Heart left ventricle (tissue), 16 donors: ENCODE measurements at regions of chr18 and their contacts with region 1.

Region 1: GRCh38 chr18:12934454-12935071 is 13.2 kb upstream of the SEH1L start:
- DNase-seq: peak; percentile 74 to 88 (median 82)
- ATAC-seq: peak; percentile 68 to 95 (median 92)
- H3K4me3 ChIP-seq: no peak overlapping the region
- H3K27ac ChIP-seq: no peak overlapping the region
- H3K4me1 ChIP-seq: peaks cover 0 to 7% (median 0%) of the 10 kb centered on the region in 12 donors
- H3K27me3 ChIP-seq: no peaks in the 10 kb centered on the region
- CTCF ChIP-seq: peak; percentile 70 to 96 (median 88)
- POLR2A ChIP-seq: no peak

Region 2: GRCh38 chr18:12391618-12392165 is 542.9 kb before region 1 on chr18:
- intact Hi-C with region 1: loop called in 3 of 10 experiments (anchors 5 to 10 kb)
- DNase-seq: peak in 3 of 5 donors; percentile 37 to 54 (median 53)
- ATAC-seq: peak; percentile 85 to 95 (median 92)
- H3K4me3 ChIP-seq: no peak overlapping the region
- H3K27ac ChIP-seq: no peak overlapping the region
- H3K4me1 ChIP-seq: no peaks in the 10 kb centered on the region
- H3K27me3 ChIP-seq: no peaks in the 10 kb centered on the region
- CTCF ChIP-seq: peak; percentile 83 to 96 (median 90)
- POLR2A ChIP-seq: no peak

Region 3: DNA sequence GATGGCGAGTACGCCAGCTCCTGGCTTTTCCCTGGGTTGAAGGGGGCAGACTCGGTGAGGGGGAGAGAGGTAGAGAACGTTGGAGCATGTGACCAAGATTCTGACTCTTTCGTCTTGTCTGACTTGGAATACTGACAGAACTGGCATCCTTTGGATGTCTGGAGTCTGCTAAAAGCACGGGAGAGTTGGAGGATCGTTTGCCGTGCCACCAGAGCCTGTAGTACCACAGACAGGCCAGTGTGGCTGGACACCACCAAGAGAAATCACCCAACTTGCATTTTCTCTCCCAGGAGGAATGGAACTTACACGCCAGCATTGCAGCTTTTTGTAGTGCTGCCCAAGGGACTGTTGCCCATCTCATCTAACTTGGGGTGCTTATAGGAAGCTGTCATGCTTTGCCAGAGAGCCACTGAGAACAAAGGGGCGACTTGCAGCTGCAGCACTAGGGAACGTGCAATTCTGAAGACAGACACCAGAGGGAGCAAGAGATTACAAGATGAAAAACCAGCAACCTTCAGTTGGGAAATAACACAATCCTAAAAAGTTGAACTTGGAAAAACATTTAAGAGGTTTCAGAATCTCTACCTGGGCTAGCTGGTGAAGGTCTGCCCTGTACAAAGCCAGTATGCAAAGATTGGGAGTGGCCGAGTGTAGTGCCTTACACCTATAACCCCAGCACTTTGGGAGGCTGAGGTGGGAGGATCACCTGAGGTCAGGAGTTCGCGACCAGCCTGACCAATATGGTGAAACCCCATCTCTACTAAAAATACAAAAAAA is 207.6 kb before region 1 on chr18:
- intact Hi-C with region 1: loop called (anchors 1 to 2 kb)
- DNase-seq: peak in 2 of 5 donors; percentile 44 to 49
- ATAC-seq: peak; percentile 37 to 68 (median 66)
- H3K4me3 ChIP-seq: no peak overlapping the region
- H3K27ac ChIP-seq: no peak overlapping the region
- H3K4me1 ChIP-seq: no peaks in the 10 kb centered on the region
- H3K27me3 ChIP-seq: no peaks in the 10 kb centered on the region
- CTCF ChIP-seq: peak; percentile 71 to 93 (median 87)
- POLR2A ChIP-seq: no peak

Region 4: GRCh38 chr18:12744103-12744502 is 190.5 kb before region 1 on chr18:
- intact Hi-C with region 1: loop called in 9 of 10 experiments (anchors 1 to 5 kb)
- DNase-seq: no peak
- ATAC-seq: peak in 3 of 4 donors; percentile 48 to 61 (median 55)
- H3K4me3 ChIP-seq: no peak overlapping the region
- H3K27ac ChIP-seq: no peak overlapping the region
- H3K4me1 ChIP-seq: no peaks in the 10 kb centered on the region
- H3K27me3 ChIP-seq: no peaks in the 10 kb centered on the region
- CTCF ChIP-seq: peak; percentile 25 to 69 (median 52)
- POLR2A ChIP-seq: no peak

Region 5: DNA sequence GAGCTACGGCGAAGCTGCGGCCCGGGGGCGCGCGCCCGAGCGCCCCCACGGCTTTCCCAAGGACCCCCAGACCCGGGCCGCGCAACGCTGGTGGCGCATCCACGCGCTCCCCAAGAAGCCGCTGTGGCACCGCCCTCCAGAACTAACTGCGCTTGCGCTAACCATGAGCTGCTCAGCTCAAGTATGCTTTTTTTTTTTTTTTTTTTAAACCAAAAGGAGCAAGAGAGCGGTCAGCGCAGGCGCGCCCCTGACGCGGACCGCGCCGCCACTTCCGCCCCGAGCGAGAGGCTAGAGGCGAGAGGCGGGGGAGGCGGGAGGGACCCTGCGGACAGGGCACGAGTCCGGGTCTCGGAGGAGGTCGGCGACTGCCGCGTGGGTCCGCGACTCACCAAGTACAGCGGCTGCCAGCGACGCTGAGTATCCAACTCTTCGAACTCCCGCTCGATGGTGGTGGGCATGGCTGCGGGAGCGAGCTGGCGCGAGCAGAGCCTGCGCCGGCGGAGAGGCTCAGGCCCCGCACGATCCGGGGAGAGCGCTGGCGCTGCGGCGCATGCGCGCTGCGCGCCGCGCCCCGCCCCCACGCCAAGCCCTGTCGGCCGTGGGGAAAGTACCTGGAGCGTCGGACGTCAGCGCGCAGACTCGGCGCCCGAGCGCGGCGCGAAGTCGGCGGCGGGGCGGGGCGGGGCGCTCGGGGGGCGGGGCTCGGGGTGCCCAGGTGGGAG is 50.7 kb before region 1 on chr18 and contains the start of gene PTPN2:
- intact Hi-C with region 1: loop called in 1 of 10 experiments (anchors 10 kb)
- DNase-seq: peak; percentile 93 to 96 (median 96)
- ATAC-seq: peak; percentile 93 to 97 (median 95)
- H3K4me3 ChIP-seq: peak within 1 kb of the TSS; percentile 60 to 97 (median 78)
- H3K27ac ChIP-seq: peak within 1 kb of the TSS; percentile 99 to 100 (median 100)
- H3K4me1 ChIP-seq: peaks cover 0 to 59% (median 13%) of the 10 kb centered on the region in 12 donors
- H3K27me3 ChIP-seq: no peaks in the 10 kb centered on the region
- CTCF ChIP-seq: no peak
- POLR2A ChIP-seq: peak in 1 of 2 donors; percentile 91
- total RNA-seq, gene PTPN2: 7.5 to 33.1 (median 10.4) TPM

Region 6: DNA sequence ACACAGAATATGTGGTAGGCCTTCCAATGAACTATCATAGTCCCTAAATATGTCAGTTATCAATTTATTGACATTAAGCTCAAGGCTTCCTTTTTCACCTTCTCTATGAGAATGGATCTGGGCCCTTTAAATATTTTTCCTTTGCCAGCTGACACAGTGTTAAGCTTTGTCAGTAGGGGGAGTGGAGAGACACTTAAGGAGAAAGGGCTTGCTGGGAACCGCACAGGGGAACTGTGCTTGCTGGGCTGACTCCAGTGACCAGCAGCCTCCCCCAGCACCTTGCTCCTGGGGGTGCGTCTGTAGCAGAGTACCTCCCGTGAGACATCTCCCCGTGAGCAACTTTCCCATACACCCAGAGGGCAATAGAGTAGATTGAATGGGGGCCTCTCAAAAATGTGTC is 44.1 kb before region 1 on chr18:
- intact Hi-C with region 1: loop called in 3 of 10 experiments (anchors 5 to 10 kb)
- DNase-seq: no peak
- ATAC-seq: peak in 1 of 4 donors; percentile 56
- H3K4me3 ChIP-seq: no peak overlapping the region
- H3K27ac ChIP-seq: no peak overlapping the region
- H3K4me1 ChIP-seq: peaks cover 0 to 12% (median 0%) of the 10 kb centered on the region in 12 donors
- H3K27me3 ChIP-seq: peaks cover 0 to 7% (median 0%) of the 10 kb centered on the region in 9 donors
- CTCF ChIP-seq: no peak
- POLR2A ChIP-seq: no peak

Region 7: GRCh38 chr18:13067124-13067523 is 132.6 kb after region 1 on chr18:
- intact Hi-C with region 1: no loop called
- DNase-seq: no peak
- ATAC-seq: no peak
- H3K4me3 ChIP-seq: no peak overlapping the region
- H3K27ac ChIP-seq: no peak overlapping the region
- H3K4me1 ChIP-seq: peaks cover 0 to 9% (median 0%) of the 10 kb centered on the region in 12 donors
- H3K27me3 ChIP-seq: no peaks in the 10 kb centered on the region
- CTCF ChIP-seq: no peak
- POLR2A ChIP-seq: no peak

Region 8: GRCh38 chr18:14053661-14054060 is 1119.1 kb after region 1 on chr18:
- intact Hi-C with region 1: no loop called
- DNase-seq: no peak
- ATAC-seq: no peak
- H3K4me3 ChIP-seq: no peak overlapping the region
- H3K27ac ChIP-seq: no peak overlapping the region
- H3K4me1 ChIP-seq: no peaks in the 10 kb centered on the region
- H3K27me3 ChIP-seq: no peaks in the 10 kb centered on the region
- CTCF ChIP-seq: no peak
- POLR2A ChIP-seq: no peak